ENCODE measurements at regions of chr4 and their contacts with region 1.

Region 1: GRCh38 chr4:67746797-67747495 is 7.2 kb downstream of the GNRHR start:
- DNase-seq: peak; percentile 59
- ATAC-seq: peak; percentile 21
- H3K4me3 ChIP-seq: no peak overlapping the region
- H3K4me3 Mint-ChIP-seq: no peak overlapping the region
- H3K27ac ChIP-seq: no peak overlapping the region
- H3K27ac Mint-ChIP-seq: no peak overlapping the region
- H3K4me1 ChIP-seq: no peaks in the 10 kb centered on the region
- H3K4me1 Mint-ChIP-seq: no peaks in the 10 kb centered on the region
- H3K27me3 ChIP-seq: no peaks in the 10 kb centered on the region
- H3K27me3 Mint-ChIP-seq: no peaks in the 10 kb centered on the region
- CTCF ChIP-seq: peak; percentile 90

Region 2: DNA sequence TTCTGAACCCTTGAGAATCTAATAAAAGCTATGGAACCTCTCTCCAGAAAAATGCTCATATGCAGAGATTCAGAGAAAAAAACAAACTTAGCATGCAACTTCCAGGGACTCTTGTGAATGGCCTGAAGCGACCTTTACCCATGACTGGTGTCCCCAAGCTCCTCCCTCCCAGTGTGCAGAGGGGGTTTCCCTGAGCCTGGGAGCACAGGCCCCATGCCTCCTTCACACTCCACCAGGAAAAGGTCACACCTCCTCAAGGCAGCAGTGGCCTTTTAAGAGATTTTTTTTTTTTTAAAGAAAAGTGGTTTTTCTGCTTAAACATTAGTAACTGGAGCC is 32.7 kb before region 1 on chr4:
- CTCF ChIA-PET with region 1: interaction called, 12 read pairs
- POLR2A ChIA-PET with region 1: no interaction called
- intact Hi-C with region 1: no loop called
- DNase-seq: no peak
- ATAC-seq: no peak
- H3K4me3 ChIP-seq: no peak overlapping the region
- H3K4me3 Mint-ChIP-seq: no peak overlapping the region
- H3K27ac ChIP-seq: no peak overlapping the region
- H3K27ac Mint-ChIP-seq: no peak overlapping the region
- H3K4me1 ChIP-seq: no peaks in the 10 kb centered on the region
- H3K4me1 Mint-ChIP-seq: peaks cover 11% of the 10 kb centered on the region
- H3K27me3 ChIP-seq: no peaks in the 10 kb centered on the region
- H3K27me3 Mint-ChIP-seq: no peaks in the 10 kb centered on the region
- CTCF ChIP-seq: no peak

Region 3: GRCh38 chr4:67736262-67736661 is 10.7 kb before region 1 on chr4:
- CTCF ChIA-PET with region 1: interaction called, 27 read pairs
- POLR2A ChIA-PET with region 1: no interaction called
- intact Hi-C with region 1: no loop called
- DNase-seq: no peak
- ATAC-seq: no peak
- H3K4me3 ChIP-seq: no peak overlapping the region
- H3K4me3 Mint-ChIP-seq: no peak overlapping the region
- H3K27ac ChIP-seq: no peak overlapping the region
- H3K27ac Mint-ChIP-seq: no peak overlapping the region
- H3K4me1 ChIP-seq: no peaks in the 10 kb centered on the region
- H3K4me1 Mint-ChIP-seq: no peaks in the 10 kb centered on the region
- H3K27me3 ChIP-seq: no peaks in the 10 kb centered on the region
- H3K27me3 Mint-ChIP-seq: no peaks in the 10 kb centered on the region
- CTCF ChIP-seq: no peak

Measured in B cell (primary cell).